Breast epithelium (tissue), 4 donors: ENCODE measurements at regions of chr5 and their contacts with region 1.

Region 1: GRCh38 chr5:181243512-181244343 is at the start of gene RACK1:
- DNase-seq: peak; percentile 80 to 88
- H3K4me3 ChIP-seq: peak within 1 kb of the TSS; percentile 59 to 79 (median 79)
- H3K27ac ChIP-seq: peak within 1 kb of the TSS; percentile 95 to 97
- H3K4me1 ChIP-seq: peaks cover 0 to 17% of the 10 kb centered on the region in 2 donors
- H3K27me3 ChIP-seq: no peaks in the 10 kb centered on the region
- CTCF ChIP-seq: peak in 1 of 3 donors; percentile 12
- POLR2A ChIP-seq: peak; percentile 66
- total RNA-seq, gene RACK1: 2,096 to 2,842 (median 2,553) TPM

Region 2: DNA sequence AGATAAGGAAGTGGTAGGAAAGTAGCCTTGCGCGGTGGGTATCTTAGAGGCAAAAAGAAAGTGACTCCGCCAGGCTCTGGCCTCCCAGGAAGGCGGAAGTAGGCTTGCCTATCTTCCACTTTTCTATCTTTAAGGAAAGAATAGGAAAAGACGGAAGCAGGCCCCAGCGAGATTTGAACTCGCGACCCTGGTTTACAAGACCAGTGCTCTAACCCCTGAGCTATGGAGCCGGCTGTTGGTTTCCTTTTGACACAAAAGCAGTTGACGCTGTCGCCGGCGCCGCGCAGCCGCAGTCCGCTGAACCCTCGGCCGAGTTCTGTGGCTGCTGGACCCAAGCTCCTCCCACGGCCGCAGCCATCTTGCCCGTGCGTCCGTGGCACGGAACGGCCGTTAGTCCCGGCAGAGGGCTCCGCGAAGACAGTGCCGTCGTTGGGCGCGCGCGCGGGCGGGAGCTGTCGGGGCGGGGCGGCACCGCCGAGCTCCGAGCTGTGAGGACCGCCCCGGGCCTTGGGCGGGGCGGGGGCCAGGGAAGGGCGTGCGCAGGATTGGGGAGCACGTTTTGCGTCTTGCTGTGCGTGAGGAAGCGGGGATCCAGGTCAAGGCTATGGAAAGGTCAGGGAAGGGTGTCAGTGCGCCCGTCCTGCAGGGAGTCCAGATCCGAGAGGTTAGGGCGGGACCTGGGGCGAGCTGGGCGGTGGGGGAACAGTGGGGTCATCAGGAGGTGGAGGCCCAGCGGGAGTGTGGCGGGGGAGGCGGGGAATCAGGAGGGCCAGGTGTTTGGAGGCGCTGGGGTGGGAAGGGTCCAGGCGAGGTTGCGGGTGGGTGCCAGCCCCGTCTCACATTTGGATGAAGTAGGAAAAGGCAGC is 52.0 kb before region 1 on chr5:
- intact Hi-C with region 1: loop called (anchors 10 kb)
- DNase-seq: peak; percentile 96
- H3K4me3 ChIP-seq: peak overlapping the region; percentile 73 to 93 (median 86)
- H3K27ac ChIP-seq: peak overlapping the region; percentile 94
- H3K4me1 ChIP-seq: peaks cover 0 to 7% of the 10 kb centered on the region in 2 donors
- H3K27me3 ChIP-seq: no peaks in the 10 kb centered on the region
- CTCF ChIP-seq: no peak
- POLR2A ChIP-seq: peak; percentile 50

Region 3: DNA sequence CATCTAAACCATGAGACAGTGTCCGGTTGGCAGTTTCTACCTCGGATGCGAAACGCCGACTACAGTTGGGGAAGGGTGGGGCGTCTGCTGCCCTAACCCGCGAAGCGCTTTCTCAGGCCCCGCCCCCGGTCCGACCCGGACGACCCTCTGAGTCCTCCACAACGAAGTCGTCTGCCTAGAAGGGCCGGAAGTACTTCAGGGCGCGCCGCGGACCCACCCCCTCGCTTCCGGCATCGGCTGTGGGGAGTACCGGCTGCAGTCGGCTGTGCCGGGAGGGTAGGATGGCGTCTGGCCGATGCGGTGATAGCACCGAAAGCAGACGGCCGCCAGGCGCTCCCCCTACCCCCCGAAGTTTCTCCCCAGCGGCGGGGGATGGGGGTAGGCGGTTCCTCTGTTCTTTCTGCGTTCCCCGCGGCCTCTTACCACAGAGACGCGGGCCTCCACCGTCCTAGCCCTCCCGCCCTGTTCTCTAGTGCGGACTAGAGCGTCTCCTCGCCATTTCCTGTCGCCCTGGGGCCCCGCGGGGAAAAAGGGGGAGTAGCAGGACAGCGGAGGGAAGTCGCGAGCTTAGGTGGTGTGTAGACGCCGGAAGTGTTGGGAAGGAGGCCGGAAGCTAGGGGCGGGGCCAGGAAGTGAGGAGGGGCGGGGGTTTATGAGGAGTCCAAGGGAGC is 20.5 kb before region 1 on chr5 and contains the start of gene TRIM41:
- intact Hi-C with region 1: loop called (anchors 2 kb)
- DNase-seq: peak; percentile 97
- H3K4me3 ChIP-seq: peak within 1 kb of the TSS; percentile 66 to 85 (median 74)
- H3K27ac ChIP-seq: peak within 1 kb of the TSS; percentile 93 to 94
- H3K4me1 ChIP-seq: no peaks in the 10 kb centered on the region
- H3K27me3 ChIP-seq: no peaks in the 10 kb centered on the region
- CTCF ChIP-seq: peak in 1 of 3 donors; percentile 14
- POLR2A ChIP-seq: peak; percentile 95
- total RNA-seq, gene TRIM41: 14.1 to 16.0 (median 15.1) TPM

Region 4: GRCh38 chr5:181260387-181261319 is 16.9 kb after region 1 on chr5 and contains the start of gene TRIM52:
- intact Hi-C with region 1: no loop called
- DNase-seq: peak; percentile 71 to 75
- H3K4me3 ChIP-seq: peak within 1 kb of the TSS; percentile 92 to 99 (median 94)
- H3K27ac ChIP-seq: peak within 1 kb of the TSS; percentile 99 to 100
- H3K4me1 ChIP-seq: peaks cover 0 to 10% of the 10 kb centered on the region in 2 donors
- H3K27me3 ChIP-seq: no peaks in the 10 kb centered on the region
- CTCF ChIP-seq: peak in 1 of 3 donors; percentile 8
- POLR2A ChIP-seq: peak; percentile 32
- total RNA-seq, gene TRIM52: 12.8 to 18.6 (median 18.4) TPM